A673 (cell line): ENCODE measurements at regions of chr14 and their contacts with region 1.

Region 1: DNA sequence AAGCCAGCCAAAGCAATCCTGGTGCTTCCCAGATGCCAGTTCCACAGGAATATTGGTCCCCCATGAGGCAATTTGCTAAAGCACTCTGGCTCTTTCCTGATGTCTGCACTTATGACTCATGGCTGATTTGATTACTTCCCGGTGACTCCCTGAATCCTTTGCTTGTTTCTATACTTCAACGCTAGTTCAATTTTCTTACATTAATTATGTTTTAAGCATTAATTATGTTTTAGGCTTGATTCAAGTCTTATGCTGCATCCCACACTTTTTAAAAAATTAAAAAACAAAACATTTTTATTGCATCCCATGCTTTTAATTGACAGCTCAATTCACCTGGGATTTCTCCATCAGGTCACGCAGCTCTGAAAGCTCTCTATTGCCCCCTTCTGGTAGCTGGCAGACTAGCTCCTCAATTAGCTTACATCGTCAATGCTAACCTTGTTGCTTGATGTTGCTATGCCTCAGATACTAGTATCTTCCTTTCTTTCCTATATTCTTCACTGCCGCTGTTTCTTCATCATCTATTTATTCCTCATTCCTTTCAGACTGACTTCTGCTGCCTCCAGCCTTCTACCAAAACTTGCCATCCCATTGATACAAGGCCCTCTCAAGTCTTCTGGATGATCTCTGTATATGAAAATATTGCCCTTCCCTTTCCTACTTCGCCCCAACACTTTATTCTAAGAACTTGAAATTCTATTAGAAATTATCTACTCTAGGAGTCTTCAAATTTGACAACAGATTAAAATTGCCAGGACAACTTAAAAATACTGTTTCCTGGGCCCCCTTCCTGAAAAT is 32.0 kb downstream of the TSHR start:
- DNase-seq: peak; percentile 71
- H3K4me3 ChIP-seq: no peak overlapping the region
- H3K27ac ChIP-seq: no peak overlapping the region
- H3K4me1 ChIP-seq: no peaks in the 10 kb centered on the region
- H3K27me3 ChIP-seq: peaks cover 34% of the 10 kb centered on the region
- CTCF ChIP-seq: peak; percentile 93

Region 2: GRCh38 chr14:80055667-80056496 is 931.6 kb before region 1 on chr14:
- CTCF ChIA-PET with region 1: interaction called, 6 read pairs
- POLR2A ChIA-PET with region 1: no interaction called
- intact Hi-C with region 1: loop called (anchors 5 kb)
- DNase-seq: peak; percentile 55
- H3K4me3 ChIP-seq: no peak overlapping the region
- H3K27ac ChIP-seq: no peak overlapping the region
- H3K4me1 ChIP-seq: no peaks in the 10 kb centered on the region
- H3K27me3 ChIP-seq: no peaks in the 10 kb centered on the region
- CTCF ChIP-seq: peak; percentile 74

Region 3: GRCh38 chr14:80213599-80213998 is 773.8 kb before region 1 on chr14:
- CTCF ChIA-PET with region 1: no interaction called
- POLR2A ChIA-PET with region 1: no interaction called
- intact Hi-C with region 1: loop called (anchors 10 kb)
- DNase-seq: peak; percentile 72
- H3K4me3 ChIP-seq: no peak overlapping the region
- H3K27ac ChIP-seq: no peak overlapping the region
- H3K4me1 ChIP-seq: no peaks in the 10 kb centered on the region
- H3K27me3 ChIP-seq: no peaks in the 10 kb centered on the region
- CTCF ChIP-seq: peak; percentile 75

Region 4: DNA sequence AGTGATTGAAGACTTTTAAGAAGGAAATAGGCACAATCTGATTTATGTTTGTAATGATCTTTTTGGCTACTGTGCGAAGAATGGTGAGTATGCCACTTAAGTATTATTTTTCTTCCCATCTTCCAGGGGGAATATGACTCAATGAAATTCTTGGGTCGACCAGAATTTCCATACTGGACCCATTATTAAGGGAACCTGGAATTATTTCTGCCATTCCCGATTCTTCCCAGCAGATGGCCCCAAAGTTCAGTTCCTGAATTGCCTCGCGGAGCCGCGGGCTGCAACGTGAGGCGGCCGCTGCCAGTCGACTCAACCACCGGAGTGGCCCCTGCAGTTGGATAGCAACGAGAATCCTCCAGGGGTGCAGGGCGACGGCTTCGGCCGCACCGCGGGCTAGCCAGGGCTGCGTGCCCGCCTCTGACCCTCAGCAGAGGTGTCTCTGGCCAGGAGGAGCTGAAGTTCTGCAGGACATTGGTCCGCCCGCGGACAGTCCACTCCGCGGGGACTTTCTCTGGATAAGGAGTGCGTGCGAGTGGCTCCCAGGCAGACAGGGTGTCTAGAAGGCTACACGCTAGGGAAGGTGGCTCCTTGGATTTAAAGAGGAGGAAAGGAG is 32.6 kb before region 1 on chr14:
- CTCF ChIA-PET with region 1: interaction called, 6 read pairs
- POLR2A ChIA-PET with region 1: no interaction called
- intact Hi-C with region 1: loop called (anchors 1 kb)
- DNase-seq: peak; percentile 83
- H3K4me3 ChIP-seq: peak overlapping the region; percentile 45
- H3K27ac ChIP-seq: no peak overlapping the region
- H3K4me1 ChIP-seq: no peaks in the 10 kb centered on the region
- H3K27me3 ChIP-seq: peaks cover 73% of the 10 kb centered on the region
- CTCF ChIP-seq: peak; percentile 79